A673 (cell line): ENCODE measurements at regions of chr1 and their contacts with region 1.

Region 1: DNA sequence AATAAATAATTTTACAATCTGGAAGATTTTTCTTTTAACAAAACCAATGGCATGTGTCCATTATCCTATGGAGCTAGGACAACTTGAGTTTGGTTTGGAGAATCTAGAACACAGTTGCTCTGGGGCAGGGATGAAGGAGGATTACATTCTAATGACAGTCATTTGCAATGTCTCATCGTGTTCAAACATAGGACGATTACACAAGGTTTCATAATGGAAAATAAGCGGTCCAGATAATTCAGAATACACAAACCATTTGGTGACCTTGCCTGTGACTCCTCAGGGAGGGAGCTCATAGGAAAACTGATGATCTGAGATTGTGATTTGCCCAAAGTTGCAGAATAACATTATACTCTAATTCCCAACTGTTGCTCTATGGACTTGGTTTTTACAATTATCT is 27.6 kb upstream of the RGL1 start:
- DNase-seq: peak; percentile 37
- H3K4me3 ChIP-seq: no peak overlapping the region
- H3K27ac ChIP-seq: peak overlapping the region; percentile 96
- H3K4me1 ChIP-seq: peaks cover 55% of the 10 kb centered on the region
- H3K27me3 ChIP-seq: no peaks in the 10 kb centered on the region
- CTCF ChIP-seq: no peak

Region 2: GRCh38 chr1:183764981-183765380 is 12.3 kb before region 1 on chr1:
- CTCF ChIA-PET with region 1: interaction called, 10 read pairs
- POLR2A ChIA-PET with region 1: no interaction called
- intact Hi-C with region 1: no loop called
- DNase-seq: no peak
- H3K4me3 ChIP-seq: no peak overlapping the region
- H3K27ac ChIP-seq: no peak overlapping the region
- H3K4me1 ChIP-seq: no peaks in the 10 kb centered on the region
- H3K27me3 ChIP-seq: no peaks in the 10 kb centered on the region
- CTCF ChIP-seq: no peak

Region 3: GRCh38 chr1:183887826-183888819 is 110.8 kb after region 1 on chr1:
- CTCF ChIA-PET with region 1: no interaction called
- POLR2A ChIA-PET with region 1: no interaction called
- intact Hi-C with region 1: loop called (anchors 2 kb)
- DNase-seq: peak; percentile 64
- H3K4me3 ChIP-seq: no peak overlapping the region
- H3K27ac ChIP-seq: peak overlapping the region; percentile 87
- H3K4me1 ChIP-seq: peaks cover 85% of the 10 kb centered on the region
- H3K27me3 ChIP-seq: no peaks in the 10 kb centered on the region
- CTCF ChIP-seq: no peak

Region 4: DNA sequence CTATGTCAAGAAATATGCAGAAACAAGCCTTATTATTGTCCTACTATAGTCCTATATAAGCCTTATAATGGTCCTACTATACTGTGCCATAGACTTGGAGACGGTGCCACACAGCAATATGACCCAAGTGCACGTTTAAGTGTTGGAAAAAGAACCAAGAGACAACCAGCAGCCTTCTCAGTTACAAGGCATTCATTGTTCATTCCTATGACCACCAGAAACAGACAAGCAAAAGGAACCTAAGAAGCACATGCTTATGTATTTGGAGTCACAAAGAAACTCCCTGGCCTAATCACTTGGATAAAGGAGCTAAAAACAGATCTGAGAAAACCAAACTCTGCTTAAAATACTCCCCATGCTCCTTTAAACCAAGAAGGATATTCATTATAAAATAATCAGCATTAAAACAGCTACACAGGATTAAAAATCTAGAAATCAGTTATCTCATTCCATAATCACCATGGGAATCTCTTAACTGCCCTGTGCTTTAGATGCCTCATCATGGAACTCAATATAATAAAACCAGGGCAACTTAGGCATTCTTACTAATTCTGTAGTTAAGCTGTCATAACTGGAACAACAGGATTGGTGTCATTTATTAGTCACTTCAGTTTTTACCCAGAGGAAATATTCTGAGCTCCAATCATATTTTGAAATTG is 253.2 kb after region 1 on chr1:
- CTCF ChIA-PET with region 1: no interaction called
- POLR2A ChIA-PET with region 1: no interaction called
- intact Hi-C with region 1: loop called (anchors 1 kb)
- DNase-seq: peak; percentile 51
- H3K4me3 ChIP-seq: no peak overlapping the region
- H3K27ac ChIP-seq: peak overlapping the region; percentile 81
- H3K4me1 ChIP-seq: peaks cover 82% of the 10 kb centered on the region
- H3K27me3 ChIP-seq: no peaks in the 10 kb centered on the region
- CTCF ChIP-seq: no peak

Region 5: GRCh38 chr1:184563308-184563707 is 786.0 kb after region 1 on chr1:
- CTCF ChIA-PET with region 1: no interaction called
- POLR2A ChIA-PET with region 1: no interaction called
- intact Hi-C with region 1: loop called (anchors 2 kb)
- DNase-seq: peak; percentile 56
- H3K4me3 ChIP-seq: no peak overlapping the region
- H3K27ac ChIP-seq: no peak overlapping the region
- H3K4me1 ChIP-seq: peaks cover 20% of the 10 kb centered on the region
- H3K27me3 ChIP-seq: no peaks in the 10 kb centered on the region
- CTCF ChIP-seq: peak; percentile 79